ENCODE measurements at regions of chr4 and their contacts with region 1.

Region 1: GRCh38 chr4:2262143-2262943 is 434 bp upstream of the MXD4 start:
- DNase-seq: peak; percentile 95 to 99 (median 97)
- ATAC-seq: peak; percentile 87
- H3K4me3 ChIP-seq: peak overlapping the region; percentile 67 to 90
- H3K4me3 Mint-ChIP-seq: peak overlapping the region; percentile 78
- H3K27ac ChIP-seq: peak overlapping the region; percentile 93 to 95
- H3K27ac Mint-ChIP-seq: peak overlapping the region; percentile 85
- H3K4me1 ChIP-seq: peaks cover 25% of the 10 kb centered on the region
- H3K4me1 Mint-ChIP-seq: peaks cover 15% of the 10 kb centered on the region
- H3K27me3 ChIP-seq: no peaks in the 10 kb centered on the region
- H3K27me3 Mint-ChIP-seq: no peaks in the 10 kb centered on the region
- CTCF ChIP-seq: no peak

Region 2: DNA sequence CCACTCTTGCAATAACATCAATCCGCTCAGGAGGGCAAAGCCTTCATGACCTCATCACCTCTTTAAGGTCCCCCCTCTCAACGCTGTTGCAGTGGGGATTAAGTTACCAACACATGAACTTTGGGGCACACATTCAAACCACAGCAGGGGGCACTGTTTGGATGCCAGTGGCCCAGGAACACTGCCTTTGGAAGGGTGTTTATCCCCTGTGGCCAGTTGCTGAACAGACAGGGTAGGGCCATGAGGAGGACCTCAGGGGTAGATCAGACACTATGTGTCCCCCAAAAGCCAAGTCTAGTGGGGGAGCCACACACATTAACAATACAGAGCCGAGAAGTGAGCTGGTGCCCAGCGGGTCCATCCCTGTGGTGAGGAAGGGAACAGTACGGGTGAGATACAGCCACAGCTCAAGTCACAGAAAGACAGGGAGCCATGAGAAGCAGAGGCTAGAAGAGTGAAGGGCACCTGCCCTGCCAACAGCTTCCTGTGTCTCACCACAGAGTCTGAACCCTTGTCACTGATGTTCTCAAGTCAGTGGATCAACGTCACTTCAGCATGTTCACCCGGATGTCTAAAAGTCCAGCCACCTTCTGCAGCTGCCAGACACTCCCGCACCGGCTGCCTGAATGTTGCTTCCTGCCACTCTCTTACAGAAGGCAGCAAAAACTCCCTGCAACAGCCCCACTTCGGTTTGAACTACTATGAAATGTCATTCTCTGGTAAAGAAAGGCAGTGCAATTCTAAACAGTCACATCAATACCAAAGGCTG is 19.4 kb after region 1 on chr4:
- CTCF ChIA-PET with region 1: interaction called, 7 read pairs
- POLR2A ChIA-PET with region 1: interaction called, 22 read pairs
- intact Hi-C with region 1: loop called (anchors 1 kb)
- DNase-seq: peak; percentile 73 to 98 (median 85)
- ATAC-seq: peak; percentile 83
- H3K4me3 ChIP-seq: peak overlapping the region in 1 of 2 experiments; percentile 30
- H3K4me3 Mint-ChIP-seq: peak overlapping the region; percentile 78
- H3K27ac ChIP-seq: peak overlapping the region; percentile 67 to 94
- H3K27ac Mint-ChIP-seq: peak overlapping the region; percentile 99
- H3K4me1 ChIP-seq: peaks cover 46% of the 10 kb centered on the region
- H3K4me1 Mint-ChIP-seq: peaks cover 41% of the 10 kb centered on the region
- H3K27me3 ChIP-seq: no peaks in the 10 kb centered on the region
- H3K27me3 Mint-ChIP-seq: no peaks in the 10 kb centered on the region
- CTCF ChIP-seq: peak; percentile 72

Region 3: DNA sequence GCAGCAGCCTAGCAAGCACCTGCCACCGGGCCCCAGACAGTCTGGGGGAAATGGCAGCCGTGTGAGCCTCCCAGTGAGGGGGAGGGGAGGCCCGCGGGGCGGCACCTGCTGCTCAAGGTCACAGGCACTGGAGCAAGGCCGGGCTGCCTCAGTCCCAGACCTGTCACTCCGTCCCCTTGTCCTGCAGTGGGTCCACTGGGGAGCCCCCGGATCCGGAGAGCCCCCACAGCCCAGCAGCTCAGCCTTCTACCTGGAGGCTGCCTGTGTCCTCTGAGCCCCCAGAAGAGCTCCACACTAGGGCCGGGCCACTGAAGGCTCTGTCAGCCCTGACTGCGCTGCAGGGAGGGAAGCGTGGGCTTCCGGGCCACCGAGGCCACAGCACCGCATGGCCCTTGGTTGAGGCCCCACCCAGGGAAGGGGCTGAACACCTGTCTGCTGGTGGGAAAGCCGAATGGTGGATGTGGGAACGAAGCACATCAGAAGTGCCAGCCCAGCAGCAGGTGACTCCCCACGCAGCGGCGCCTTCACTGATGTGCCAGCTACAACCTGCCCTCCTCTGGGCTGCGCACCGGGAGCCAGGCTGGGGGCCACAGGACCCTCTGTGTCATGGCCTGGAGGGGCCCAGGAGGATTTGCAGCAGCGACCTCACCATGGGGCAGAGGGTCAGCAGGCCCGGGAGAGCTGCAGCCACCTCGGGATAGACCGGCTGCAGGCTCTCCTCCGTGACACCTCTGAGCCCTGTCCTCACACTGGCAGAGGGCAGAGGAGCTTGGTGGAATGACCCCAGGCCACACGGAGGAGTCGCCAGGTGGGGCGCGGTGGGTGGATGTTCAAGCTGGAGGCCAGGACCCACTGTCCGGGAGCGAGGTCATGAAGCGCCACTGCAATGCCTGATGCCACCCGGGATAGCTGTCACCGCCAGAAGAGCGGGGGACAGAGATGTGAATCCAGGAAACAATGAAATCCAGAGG is 34.6 kb after region 1 on chr4:
- CTCF ChIA-PET with region 1: no interaction called
- POLR2A ChIA-PET with region 1: interaction called, 26 read pairs
- intact Hi-C with region 1: loop called in 1 of 2 experiments (anchors 5 kb)
- DNase-seq: peak in 5 of 9 experiments; percentile 33 to 66 (median 57)
- ATAC-seq: peak; percentile 68
- H3K4me3 ChIP-seq: peak overlapping the region in 1 of 2 experiments; percentile 27
- H3K4me3 Mint-ChIP-seq: peak overlapping the region; percentile 85
- H3K27ac ChIP-seq: peak overlapping the region in 1 of 2 experiments; percentile 17
- H3K27ac Mint-ChIP-seq: peak overlapping the region; percentile 96
- H3K4me1 ChIP-seq: peaks cover 58% of the 10 kb centered on the region
- H3K4me1 Mint-ChIP-seq: peaks cover 58% of the 10 kb centered on the region
- H3K27me3 ChIP-seq: no peaks in the 10 kb centered on the region
- H3K27me3 Mint-ChIP-seq: no peaks in the 10 kb centered on the region
- CTCF ChIP-seq: no peak

Region 4: GRCh38 chr4:2364654-2365053 is 102.3 kb after region 1 on chr4:
- CTCF ChIA-PET with region 1: no interaction called
- POLR2A ChIA-PET with region 1: interaction called, 3 read pairs
- intact Hi-C with region 1: loop called in 1 of 2 experiments (anchors 2 kb)
- DNase-seq: peak; percentile 32 to 83 (median 60)
- ATAC-seq: peak; percentile 85
- H3K4me3 ChIP-seq: peak overlapping the region; percentile 69 to 74
- H3K4me3 Mint-ChIP-seq: peak overlapping the region; percentile 75
- H3K27ac ChIP-seq: peak overlapping the region; percentile 52 to 65
- H3K27ac Mint-ChIP-seq: peak overlapping the region; percentile 83
- H3K4me1 ChIP-seq: peaks cover 19% of the 10 kb centered on the region
- H3K4me1 Mint-ChIP-seq: peaks cover 13% of the 10 kb centered on the region
- H3K27me3 ChIP-seq: no peaks in the 10 kb centered on the region
- H3K27me3 Mint-ChIP-seq: no peaks in the 10 kb centered on the region
- CTCF ChIP-seq: no peak

Region 5: GRCh38 chr4:2418650-2419571 is 156.6 kb after region 1 on chr4 and contains the start of gene CFAP99:
- CTCF ChIA-PET with region 1: interaction called, 3 read pairs
- POLR2A ChIA-PET with region 1: interaction called, 13 read pairs
- intact Hi-C with region 1: loop called (anchors 1 to 5 kb)
- DNase-seq: peak; percentile 97 to 99 (median 98)
- ATAC-seq: peak; percentile 87
- H3K4me3 ChIP-seq: peak within 1 kb of the TSS; percentile 52 to 56
- H3K4me3 Mint-ChIP-seq: peak within 1 kb of the TSS; percentile 87
- H3K27ac ChIP-seq: peak within 1 kb of the TSS; percentile 73 to 76
- H3K27ac Mint-ChIP-seq: peak within 1 kb of the TSS; percentile 94
- H3K4me1 ChIP-seq: peaks cover 43% of the 10 kb centered on the region
- H3K4me1 Mint-ChIP-seq: peaks cover 44% of the 10 kb centered on the region
- H3K27me3 ChIP-seq: peaks cover 6 to 10% of the 10 kb centered on the region in 2 experiments
- H3K27me3 Mint-ChIP-seq: peaks cover 14% of the 10 kb centered on the region
- CTCF ChIP-seq: peak; percentile 58
- total RNA-seq, gene CFAP99: 0.22 to 0.36 TPM

Region 6: DNA sequence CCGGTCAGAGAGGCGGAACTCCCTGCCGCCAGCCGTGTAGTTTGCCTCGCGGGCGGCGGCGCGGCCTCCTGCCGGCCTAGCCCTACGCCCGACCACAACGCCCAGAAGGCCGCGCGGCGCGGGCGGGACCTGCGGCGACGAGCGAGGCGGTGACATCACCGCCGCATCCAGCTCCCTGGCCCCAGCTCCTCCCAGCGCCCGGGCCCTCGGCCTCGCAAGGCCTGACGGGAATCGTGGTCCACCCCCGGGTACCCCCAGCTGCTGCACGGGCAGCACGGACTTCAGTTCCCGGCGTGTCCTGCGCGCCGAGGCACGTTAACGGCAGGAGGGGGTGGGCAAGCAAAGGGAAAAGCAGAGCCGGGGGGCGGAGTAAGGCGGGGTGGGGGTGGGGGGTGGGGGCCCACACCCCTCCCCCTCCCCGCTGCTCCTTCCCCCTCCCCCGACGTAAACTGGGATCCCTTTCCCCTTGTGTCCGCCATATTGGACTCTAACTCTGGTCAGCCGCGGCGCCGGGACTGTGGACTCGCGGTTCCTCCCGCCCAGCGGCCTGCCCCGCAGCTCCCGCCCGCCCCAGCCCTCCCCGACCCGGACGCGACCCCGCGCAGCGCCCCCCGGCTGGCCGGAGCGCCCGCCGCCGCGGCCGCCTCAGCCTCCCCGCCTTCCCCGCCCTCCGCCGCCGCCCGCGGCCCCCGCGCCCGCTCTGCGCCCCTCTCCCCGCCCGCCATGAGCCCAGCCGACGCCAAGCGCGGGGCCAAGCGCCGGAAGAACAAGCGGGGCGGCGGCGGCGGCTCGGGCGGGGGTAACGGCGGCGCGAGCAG is 274.1 kb after region 1 on chr4 and contains the start of gene FAM193A:
- CTCF ChIA-PET with region 1: no interaction called
- POLR2A ChIA-PET with region 1: no interaction called
- intact Hi-C with region 1: loop called in 1 of 2 experiments (anchors 1 kb)
- DNase-seq: peak; percentile 97 to 100 (median 99)
- ATAC-seq: peak; percentile 94
- H3K4me3 ChIP-seq: peak within 1 kb of the TSS; percentile 64 to 67
- H3K4me3 Mint-ChIP-seq: peak within 1 kb of the TSS; percentile 90
- H3K27ac ChIP-seq: peak within 1 kb of the TSS; percentile 71 to 76
- H3K27ac Mint-ChIP-seq: peak within 1 kb of the TSS; percentile 92
- H3K4me1 ChIP-seq: peaks cover 26% of the 10 kb centered on the region
- H3K4me1 Mint-ChIP-seq: peaks cover 29% of the 10 kb centered on the region
- H3K27me3 ChIP-seq: no peaks in the 10 kb centered on the region
- H3K27me3 Mint-ChIP-seq: no peaks in the 10 kb centered on the region
- CTCF ChIP-seq: no peak
- total RNA-seq, gene FAM193A: 29.0 to 30.2 TPM

Measured in CD8-positive, alpha-beta T cell (primary cell).